Caco-2 (cell line): ENCODE measurements at regions of chrX and their contacts with region 1.

Region 1: GRCh38 chrX:154840856-154841255 is 6.4 kb upstream of the SMIM9 start:
- DNase-seq: peak in 1 of 2 experiments; percentile 19
- H3K4me3 ChIP-seq: no peak overlapping the region
- H3K4me3 Mint-ChIP-seq: no peak overlapping the region
- H3K27ac Mint-ChIP-seq: no peak overlapping the region
- H3K4me1 ChIP-seq: no peaks in the 10 kb centered on the region
- H3K4me1 Mint-ChIP-seq: no peaks in the 10 kb centered on the region
- H3K27me3 ChIP-seq: no peaks in the 10 kb centered on the region
- H3K27me3 Mint-ChIP-seq: peaks cover 4% of the 10 kb centered on the region
- CTCF ChIP-seq: peak; percentile 32 to 50

Region 2: GRCh38 chrX:154714925-154715324 is 125.9 kb before region 1 on chrX:
- CTCF ChIA-PET with region 1: no interaction called
- POLR2A ChIA-PET with region 1: no interaction called
- intact Hi-C with region 1: loop called (anchors 1 kb)
- DNase-seq: peak in 1 of 2 experiments; percentile 43
- H3K4me3 ChIP-seq: no peak overlapping the region
- H3K4me3 Mint-ChIP-seq: no peak overlapping the region
- H3K27ac Mint-ChIP-seq: no peak overlapping the region
- H3K4me1 ChIP-seq: no peaks in the 10 kb centered on the region
- H3K4me1 Mint-ChIP-seq: no peaks in the 10 kb centered on the region
- H3K27me3 ChIP-seq: no peaks in the 10 kb centered on the region
- H3K27me3 Mint-ChIP-seq: peaks cover 13% of the 10 kb centered on the region
- CTCF ChIP-seq: peak; percentile 45 to 54

Region 3: DNA sequence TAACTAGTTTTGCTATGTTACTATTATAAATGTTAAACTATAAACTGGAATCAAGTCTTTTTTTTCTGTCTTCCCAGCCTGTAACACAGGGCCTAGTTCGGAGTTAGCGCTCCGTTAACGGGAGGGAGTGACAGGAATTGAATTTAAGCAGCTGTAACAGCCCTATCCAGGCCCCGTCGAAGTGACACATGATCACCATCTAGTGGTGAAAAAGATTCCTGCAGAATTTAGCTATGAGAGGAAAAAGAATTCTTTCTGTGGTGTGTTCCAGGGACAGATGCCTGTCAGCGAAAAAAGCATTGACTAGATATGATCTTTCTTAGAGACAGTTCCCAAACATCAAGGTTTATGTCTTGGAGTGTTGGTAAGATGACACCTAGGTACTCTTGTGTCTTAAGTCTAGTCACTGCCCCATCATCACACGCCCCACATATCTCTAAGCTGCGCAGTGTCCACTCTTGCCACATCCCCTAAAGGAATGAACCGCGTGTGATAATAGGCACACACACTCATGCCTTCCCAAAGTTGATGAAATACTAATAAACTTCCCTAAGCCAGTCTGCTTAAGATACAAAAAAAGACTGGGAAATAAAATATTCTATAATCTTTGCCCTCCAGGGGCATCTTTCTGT is 92.0 kb before region 1 on chrX:
- CTCF ChIA-PET with region 1: no interaction called
- POLR2A ChIA-PET with region 1: no interaction called
- intact Hi-C with region 1: loop called (anchors 2 kb)
- DNase-seq: peak in 1 of 2 experiments; percentile 57
- H3K4me3 ChIP-seq: no peak overlapping the region
- H3K4me3 Mint-ChIP-seq: no peak overlapping the region
- H3K27ac Mint-ChIP-seq: no peak overlapping the region
- H3K4me1 ChIP-seq: no peaks in the 10 kb centered on the region
- H3K4me1 Mint-ChIP-seq: no peaks in the 10 kb centered on the region
- H3K27me3 ChIP-seq: 0 out of 2 replicates have a peak, but pooled peaks cover 2% of the 10 kb centered on the region
- H3K27me3 Mint-ChIP-seq: peaks cover 17% of the 10 kb centered on the region
- CTCF ChIP-seq: peak; percentile 45 to 56